CD4-positive, alpha-beta T cell (primary cell): ENCODE measurements at regions of chr4 and their contacts with region 1.

Region 1: GRCh38 chr4:184538023-184538599 is 63.8 kb upstream of the IRF2 start:
- DNase-seq: peak; percentile 41 to 87 (median 58)
- ATAC-seq: peak; percentile 41
- H3K4me3 ChIP-seq: peak overlapping the region; percentile 82
- H3K4me3 Mint-ChIP-seq: peak overlapping the region; percentile 96
- H3K27ac ChIP-seq: peak overlapping the region; percentile 87 to 96
- H3K27ac Mint-ChIP-seq: peak overlapping the region; percentile 99
- H3K4me1 ChIP-seq: peaks cover 29% of the 10 kb centered on the region
- H3K4me1 Mint-ChIP-seq: peaks cover 50% of the 10 kb centered on the region
- H3K27me3 ChIP-seq: no peaks in the 10 kb centered on the region
- H3K27me3 Mint-ChIP-seq: no peaks in the 10 kb centered on the region
- CTCF ChIP-seq: peak; percentile 63

Region 2: DNA sequence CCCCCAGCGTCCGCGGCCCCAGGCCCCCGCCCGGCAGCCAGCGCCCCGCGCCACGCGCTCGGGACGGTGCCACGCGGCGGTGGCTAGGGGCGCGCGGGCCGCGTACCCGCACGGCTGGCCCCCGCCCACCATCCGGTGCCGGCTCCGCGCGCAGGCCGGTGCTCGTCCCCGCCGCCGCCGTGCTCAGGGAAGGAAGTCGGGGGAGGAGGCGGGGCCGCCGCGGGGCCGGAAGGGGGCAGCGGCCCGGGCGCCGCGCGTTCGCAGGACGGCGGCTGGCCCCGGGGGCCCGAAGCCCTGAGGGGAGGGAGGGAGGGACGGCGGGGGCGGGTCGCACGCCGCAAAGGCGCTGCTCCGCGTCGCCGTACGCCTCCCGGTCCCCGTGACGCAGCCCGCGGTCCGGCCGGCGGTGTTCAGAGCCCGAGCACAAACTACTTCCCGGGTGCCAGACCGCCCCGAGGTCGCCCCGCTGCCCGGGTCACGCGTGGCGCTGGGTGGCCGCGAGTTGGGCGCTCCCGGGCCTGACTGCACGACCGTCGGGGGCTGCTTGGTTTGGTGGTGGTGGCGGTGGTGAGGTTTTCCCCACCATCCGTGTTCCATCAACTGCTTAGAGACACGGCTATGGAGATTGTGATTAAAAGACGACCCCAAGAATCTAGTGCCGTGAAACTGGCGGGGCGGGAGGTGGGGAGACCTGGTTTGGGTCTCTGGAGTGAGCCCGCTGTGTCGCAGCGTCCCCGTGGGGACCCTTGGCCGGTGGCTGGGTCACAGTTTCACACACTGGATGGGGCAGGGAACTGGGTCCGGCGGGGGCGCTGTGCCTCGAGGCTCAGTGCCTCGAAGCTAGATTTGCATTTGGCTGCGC is 1620.7 kb before region 1 on chr4 and contains the start of gene DCTD:
- CTCF ChIA-PET with region 1: no interaction called
- POLR2A ChIA-PET with region 1: no interaction called
- intact Hi-C with region 1: loop called in 1 of 2 experiments (anchors 5 kb)
- DNase-seq: peak; percentile 54 to 90 (median 78)
- ATAC-seq: peak; percentile 78
- H3K4me3 ChIP-seq: peak within 1 kb of the TSS; percentile 85
- H3K4me3 Mint-ChIP-seq: peak within 1 kb of the TSS; percentile 93
- H3K27ac ChIP-seq: peak within 1 kb of the TSS; percentile 89 to 96
- H3K27ac Mint-ChIP-seq: peak within 1 kb of the TSS; percentile 89
- H3K4me1 ChIP-seq: peaks cover 42% of the 10 kb centered on the region
- H3K4me1 Mint-ChIP-seq: peaks cover 48% of the 10 kb centered on the region
- H3K27me3 ChIP-seq: no peaks in the 10 kb centered on the region
- H3K27me3 Mint-ChIP-seq: no peaks in the 10 kb centered on the region
- CTCF ChIP-seq: peak; percentile 42
- total RNA-seq, gene DCTD: 49.4 to 54.3 TPM

Region 3: DNA sequence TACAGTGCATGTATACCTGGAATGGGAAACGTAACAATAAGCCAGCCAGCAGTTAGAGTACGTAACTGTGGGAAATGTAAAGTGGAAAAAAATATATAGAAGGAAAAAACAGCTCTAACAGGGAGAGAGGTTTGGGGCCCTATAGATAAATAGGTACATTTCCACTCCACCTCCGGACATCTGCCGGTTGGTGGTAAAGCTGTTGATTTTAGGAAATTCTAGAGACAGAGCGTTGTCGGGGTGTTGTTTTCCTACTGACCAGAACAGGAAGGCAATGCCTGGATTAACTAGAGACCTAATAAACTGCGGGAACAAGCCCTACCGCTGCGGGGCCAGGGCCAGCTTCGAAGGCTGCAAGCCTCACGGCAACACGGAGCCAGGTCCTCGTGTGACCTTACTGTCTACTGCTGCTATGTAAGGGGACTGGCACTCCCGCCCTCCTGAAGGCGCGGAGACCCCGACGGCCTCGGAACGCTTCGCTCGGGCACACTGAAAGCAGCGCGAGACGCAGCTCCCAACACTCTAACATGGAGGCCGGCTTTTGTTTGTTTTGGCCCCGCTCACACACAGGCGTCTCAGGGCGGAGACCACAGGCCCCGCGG is 1094.4 kb before region 1 on chr4:
- CTCF ChIA-PET with region 1: no interaction called
- POLR2A ChIA-PET with region 1: no interaction called
- intact Hi-C with region 1: no loop called
- DNase-seq: peak in 6 of 14 experiments; percentile 25 to 68 (median 32)
- ATAC-seq: peak; percentile 17
- H3K4me3 ChIP-seq: peak overlapping the region; percentile 94
- H3K4me3 Mint-ChIP-seq: peak overlapping the region; percentile 92
- H3K27ac ChIP-seq: peak overlapping the region; percentile 91
- H3K27ac Mint-ChIP-seq: peak overlapping the region; percentile 96
- H3K4me1 ChIP-seq: peaks cover 26% of the 10 kb centered on the region
- H3K4me1 Mint-ChIP-seq: peaks cover 50% of the 10 kb centered on the region
- H3K27me3 ChIP-seq: no peaks in the 10 kb centered on the region
- H3K27me3 Mint-ChIP-seq: no peaks in the 10 kb centered on the region
- CTCF ChIP-seq: no peak

Region 4: GRCh38 chr4:184310171-184310567 is 227.9 kb before region 1 on chr4:
- CTCF ChIA-PET with region 1: no interaction called
- POLR2A ChIA-PET with region 1: no interaction called
- intact Hi-C with region 1: loop called in 1 of 2 experiments (anchors 1 kb)
- DNase-seq: peak in 13 of 14 experiments; percentile 7 to 72 (median 29)
- ATAC-seq: peak; percentile 79
- H3K4me3 ChIP-seq: no peak overlapping the region
- H3K4me3 Mint-ChIP-seq: no peak overlapping the region
- H3K27ac ChIP-seq: no peak overlapping the region
- H3K27ac Mint-ChIP-seq: peak overlapping the region; percentile 31
- H3K4me1 ChIP-seq: peaks cover 21% of the 10 kb centered on the region
- H3K4me1 Mint-ChIP-seq: peaks cover 30% of the 10 kb centered on the region
- H3K27me3 ChIP-seq: no peaks in the 10 kb centered on the region
- H3K27me3 Mint-ChIP-seq: no peaks in the 10 kb centered on the region
- CTCF ChIP-seq: no peak

Region 5: GRCh38 chr4:184506527-184507121 is 31.5 kb before region 1 on chr4:
- CTCF ChIA-PET with region 1: no interaction called
- POLR2A ChIA-PET with region 1: interaction called, 16 read pairs
- intact Hi-C with region 1: no loop called
- DNase-seq: peak in 4 of 14 experiments; percentile 4 to 58 (median 28)
- ATAC-seq: peak; percentile 80
- H3K4me3 ChIP-seq: no peak overlapping the region
- H3K4me3 Mint-ChIP-seq: peak overlapping the region; percentile 1
- H3K27ac ChIP-seq: no peak overlapping the region
- H3K27ac Mint-ChIP-seq: no peak overlapping the region
- H3K4me1 ChIP-seq: peaks cover 21% of the 10 kb centered on the region
- H3K4me1 Mint-ChIP-seq: peaks cover 36% of the 10 kb centered on the region
- H3K27me3 ChIP-seq: no peaks in the 10 kb centered on the region
- H3K27me3 Mint-ChIP-seq: no peaks in the 10 kb centered on the region
- CTCF ChIP-seq: peak; percentile 33

Region 6: GRCh38 chr4:184733654-184734524 is 195.8 kb after region 1 on chr4 and contains the start of gene CENPU:
- CTCF ChIA-PET with region 1: no interaction called
- POLR2A ChIA-PET with region 1: interaction called, 11 read pairs
- intact Hi-C with region 1: loop called in 1 of 2 experiments (anchors 5 kb)
- DNase-seq: peak; percentile 91 to 98 (median 93)
- ATAC-seq: peak; percentile 97
- H3K4me3 ChIP-seq: peak within 1 kb of the TSS; percentile 87
- H3K4me3 Mint-ChIP-seq: peak within 1 kb of the TSS; percentile 93
- H3K27ac ChIP-seq: no peak within 1 kb of the TSS
- H3K27ac Mint-ChIP-seq: peak within 1 kb of the TSS; percentile 74
- H3K4me1 ChIP-seq: peaks cover 13% of the 10 kb centered on the region
- H3K4me1 Mint-ChIP-seq: peaks cover 17% of the 10 kb centered on the region
- H3K27me3 ChIP-seq: no peaks in the 10 kb centered on the region
- H3K27me3 Mint-ChIP-seq: no peaks in the 10 kb centered on the region
- CTCF ChIP-seq: no peak
- total RNA-seq, gene CENPU: 1.9 to 2.8 TPM

Region 7: GRCh38 chr4:185203486-185204237 is 665.6 kb after region 1 on chr4 and contains the start of gene CFAP97:
- CTCF ChIA-PET with region 1: no interaction called
- POLR2A ChIA-PET with region 1: no interaction called
- intact Hi-C with region 1: loop called in 1 of 2 experiments (anchors 5 kb)
- DNase-seq: peak; percentile 59 to 96 (median 76)
- ATAC-seq: peak; percentile 79
- H3K4me3 ChIP-seq: peak within 1 kb of the TSS; percentile 76
- H3K4me3 Mint-ChIP-seq: peak within 1 kb of the TSS; percentile 98
- H3K27ac ChIP-seq: peak within 1 kb of the TSS; percentile 89 to 90
- H3K27ac Mint-ChIP-seq: peak within 1 kb of the TSS; percentile 89
- H3K4me1 ChIP-seq: peaks cover 42% of the 10 kb centered on the region
- H3K4me1 Mint-ChIP-seq: peaks cover 60% of the 10 kb centered on the region
- H3K27me3 ChIP-seq: no peaks in the 10 kb centered on the region
- H3K27me3 Mint-ChIP-seq: no peaks in the 10 kb centered on the region
- CTCF ChIP-seq: no peak
- total RNA-seq, gene CFAP97: 24.5 to 26.6 TPM

Region 8: DNA sequence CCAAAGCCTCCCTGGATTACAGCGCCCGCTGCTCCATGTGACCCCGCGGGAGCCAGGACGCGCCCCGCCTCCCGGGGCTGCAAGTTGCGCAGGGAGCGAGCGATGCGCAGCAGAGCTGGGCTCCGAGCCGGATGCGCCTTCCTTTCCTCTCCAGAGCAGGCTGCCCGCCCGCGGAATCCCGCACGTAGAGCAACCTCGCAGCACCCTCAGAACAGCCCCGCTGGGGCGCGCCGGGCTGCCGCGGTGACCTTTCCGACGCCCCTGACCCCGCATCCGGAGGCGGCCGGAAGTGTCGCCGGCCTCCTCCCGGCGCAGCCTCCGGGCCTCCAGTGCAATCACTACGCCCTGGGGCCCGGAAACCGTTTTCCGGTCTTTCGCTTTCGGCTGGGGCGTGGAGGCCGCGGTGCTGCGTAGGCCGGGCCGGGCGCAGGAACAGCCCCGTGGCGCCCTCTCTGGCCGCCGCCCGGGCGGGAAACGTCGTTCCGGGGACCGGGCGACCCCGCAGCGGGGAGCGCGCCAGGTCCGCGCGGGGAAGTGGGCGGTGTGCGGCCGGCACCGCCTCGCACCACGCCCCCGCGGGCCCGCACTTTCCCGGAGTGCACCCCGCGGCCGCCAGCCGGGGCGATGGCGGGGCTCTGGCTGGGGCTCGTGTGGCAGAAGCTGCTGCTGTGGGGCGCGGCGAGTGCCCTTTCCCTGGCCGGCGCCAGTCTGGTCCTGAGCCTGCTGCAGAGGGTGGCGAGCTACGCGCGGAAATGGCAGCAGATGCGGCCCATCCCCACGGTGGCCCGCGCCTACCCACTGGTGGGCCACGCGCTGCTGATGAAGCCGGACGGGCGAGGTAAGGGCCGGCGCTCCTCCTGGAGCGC is 1653.3 kb after region 1 on chr4 and contains the start of gene CYP4V2:
- CTCF ChIA-PET with region 1: no interaction called
- POLR2A ChIA-PET with region 1: interaction called, 4 read pairs
- intact Hi-C with region 1: loop called in 1 of 2 experiments (anchors 5 kb)
- DNase-seq: peak; percentile 72 to 94 (median 84)
- ATAC-seq: peak; percentile 74
- H3K4me3 ChIP-seq: peak within 1 kb of the TSS; percentile 86
- H3K4me3 Mint-ChIP-seq: peak within 1 kb of the TSS; percentile 96
- H3K27ac ChIP-seq: peak within 1 kb of the TSS; percentile 83 to 88
- H3K27ac Mint-ChIP-seq: peak within 1 kb of the TSS; percentile 97
- H3K4me1 ChIP-seq: peaks cover 24% of the 10 kb centered on the region
- H3K4me1 Mint-ChIP-seq: peaks cover 62% of the 10 kb centered on the region
- H3K27me3 ChIP-seq: no peaks in the 10 kb centered on the region
- H3K27me3 Mint-ChIP-seq: no peaks in the 10 kb centered on the region
- CTCF ChIP-seq: peak; percentile 27
- total RNA-seq, gene CYP4V2: 12.7 to 12.8 TPM